ENCODE measurements at regions of chr13 and their contacts with region 1.

Region 1: DNA sequence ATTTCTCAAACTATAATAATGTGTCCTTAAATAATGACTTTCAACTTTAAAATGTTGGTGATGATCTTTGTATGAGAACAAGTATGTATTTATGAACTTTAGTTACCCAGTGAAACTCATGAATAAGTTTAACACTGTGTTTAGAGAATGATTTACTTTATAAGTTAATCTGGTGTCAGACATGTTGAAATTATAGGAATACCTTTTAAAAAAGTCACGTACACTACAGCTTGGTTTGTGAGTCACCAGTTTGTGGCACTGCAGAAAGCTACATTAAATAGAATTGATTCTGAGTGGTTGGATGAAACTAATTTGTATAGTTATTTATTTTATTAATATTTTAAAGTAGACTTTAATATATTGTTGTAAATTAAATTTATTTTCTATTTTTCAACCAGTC is 1366.2 kb upstream of the PCDH20 start:
- DNase-seq: no peak
- H3K4me3 ChIP-seq: no peak overlapping the region
- H3K27ac ChIP-seq: no peak overlapping the region
- H3K4me1 ChIP-seq: no peaks in the 10 kb centered on the region
- CTCF ChIP-seq: no peak

Region 2: GRCh38 chr13:62767473-62767872 is 14.4 kb before region 1 on chr13:
- CTCF ChIA-PET with region 1: no interaction called
- POLR2A ChIA-PET with region 1: interaction called, 3 read pairs
- intact Hi-C with region 1: loop called (anchors 1 kb)
- DNase-seq: no peak
- H3K4me3 ChIP-seq: no peak overlapping the region
- H3K27ac ChIP-seq: no peak overlapping the region
- H3K4me1 ChIP-seq: no peaks in the 10 kb centered on the region
- CTCF ChIP-seq: no peak